HepG2 (cell line): ENCODE measurements at regions of chr1 and their contacts with region 1.

Region 1: GRCh38 chr1:230658691-230659090 is 16.4 kb downstream of the COG2 start:
- DNase-seq: no peak
- ATAC-seq: no peak
- H3K4me3 ChIP-seq: peak overlapping the region in 1 of 3 experiments; percentile 40; a peak in 1 of 6 replicates
- H3K27ac ChIP-seq: peak overlapping the region; percentile 31
- H3K4me1 ChIP-seq: peaks cover 41% of the 10 kb centered on the region
- H3K27me3 ChIP-seq: no peaks in the 10 kb centered on the region
- CTCF ChIP-seq: no peak
- EP300 ChIP-seq: no peak
- POLR2A ChIP-seq: no peak
- RAD21 ChIP-seq: no peak

Region 2: DNA sequence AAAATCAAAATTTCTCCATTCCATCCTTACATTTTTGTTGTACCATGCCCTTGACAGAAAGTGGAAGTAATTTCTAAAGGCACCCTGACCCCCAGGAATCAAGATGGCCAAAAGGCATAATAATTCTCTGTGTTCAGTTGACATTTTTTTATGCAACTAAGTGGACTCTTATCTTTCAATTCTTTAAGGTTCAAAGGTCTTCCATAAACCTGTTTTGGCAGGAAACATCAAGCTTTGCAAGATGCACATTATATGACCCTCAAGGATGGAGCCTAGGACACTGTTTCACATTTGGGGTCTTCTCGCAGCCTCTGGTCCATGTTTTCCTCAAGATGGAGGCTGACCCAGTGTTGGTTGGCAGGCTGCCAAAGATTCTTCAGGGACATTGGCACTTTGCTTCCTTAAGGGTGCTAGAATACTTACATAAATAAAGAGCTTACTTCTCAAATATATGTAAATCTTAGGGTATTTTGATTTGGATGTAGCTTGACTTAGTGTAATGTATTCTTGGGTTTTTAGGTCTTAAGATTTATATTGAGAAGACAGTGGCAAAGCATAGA is 64.4 kb before region 1 on chr1:
- CTCF ChIA-PET with region 1: no interaction called
- POLR2A ChIA-PET with region 1: no interaction called
- in situ Hi-C with region 1: no loop called
- intact Hi-C with region 1: no loop called
- DNase-seq: no peak
- ATAC-seq: no peak
- H3K4me3 ChIP-seq: no peak overlapping the region
- H3K27ac ChIP-seq: no peak overlapping the region
- H3K4me1 ChIP-seq: no peaks in the 10 kb centered on the region
- H3K27me3 ChIP-seq: peaks cover 0 to 7% of the 10 kb centered on the region in 2 experiments; a peak in 1 of 5 replicates
- CTCF ChIP-seq: no peak
- EP300 ChIP-seq: no peak
- POLR2A ChIP-seq: no peak
- RAD21 ChIP-seq: no peak

Region 3: DNA sequence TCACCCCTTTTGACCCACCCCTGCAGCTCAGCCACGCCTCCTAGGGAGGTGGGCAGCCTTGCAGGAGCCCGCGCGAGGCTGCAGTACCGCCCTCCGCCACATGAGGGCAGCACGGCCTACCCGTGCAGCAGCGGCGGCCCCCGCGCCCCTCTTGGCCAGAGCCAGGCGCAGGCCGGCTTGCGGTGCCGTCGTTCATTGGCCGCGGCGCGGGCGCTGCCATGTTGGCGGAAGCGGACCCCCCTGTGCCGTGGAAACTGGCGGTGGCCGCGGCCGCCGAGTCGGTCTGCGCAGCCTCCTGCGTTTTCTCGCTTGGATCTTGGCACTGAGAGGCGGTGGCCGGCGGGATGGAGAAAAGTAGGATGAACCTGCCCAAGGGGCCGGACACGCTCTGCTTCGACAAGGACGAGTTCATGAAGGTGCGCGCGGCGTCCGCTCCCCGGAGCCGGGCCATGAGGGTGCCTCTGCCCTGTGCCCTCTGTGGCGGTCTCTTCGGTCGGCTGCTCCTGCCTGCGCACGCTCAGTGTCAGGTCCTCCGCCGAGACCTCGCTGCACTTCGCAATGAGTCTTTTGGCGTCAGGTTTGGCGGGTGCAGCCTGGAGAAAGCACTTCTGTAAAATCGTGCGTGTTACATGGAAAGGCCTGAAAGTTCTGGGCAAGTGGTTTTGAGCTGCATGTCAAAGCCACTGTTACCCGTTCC is 16.3 kb before region 1 on chr1 and contains the start of gene COG2:
- CTCF ChIA-PET with region 1: no interaction called
- POLR2A ChIA-PET with region 1: interaction called, 17 read pairs
- in situ Hi-C with region 1: no loop called
- intact Hi-C with region 1: no loop called
- DNase-seq: peak; percentile 77
- ATAC-seq: peak; percentile 95
- H3K4me3 ChIP-seq: peak within 1 kb of the TSS; percentile 85 to 96 (median 88)
- H3K27ac ChIP-seq: peak within 1 kb of the TSS; percentile 86
- H3K4me1 ChIP-seq: peaks cover 75% of the 10 kb centered on the region
- H3K27me3 ChIP-seq: no peaks in the 10 kb centered on the region; a peak in 1 of 5 replicates
- CTCF ChIP-seq: peak; percentile 96
- EP300 ChIP-seq: no peak; a peak in 1 of 4 replicates
- POLR2A ChIP-seq: peak; percentile 67 to 88
- RAD21 ChIP-seq: peak; percentile 93
- total RNA-seq, gene COG2: 36.3 and 51.3 TPM in 2 replicates

Region 4: DNA sequence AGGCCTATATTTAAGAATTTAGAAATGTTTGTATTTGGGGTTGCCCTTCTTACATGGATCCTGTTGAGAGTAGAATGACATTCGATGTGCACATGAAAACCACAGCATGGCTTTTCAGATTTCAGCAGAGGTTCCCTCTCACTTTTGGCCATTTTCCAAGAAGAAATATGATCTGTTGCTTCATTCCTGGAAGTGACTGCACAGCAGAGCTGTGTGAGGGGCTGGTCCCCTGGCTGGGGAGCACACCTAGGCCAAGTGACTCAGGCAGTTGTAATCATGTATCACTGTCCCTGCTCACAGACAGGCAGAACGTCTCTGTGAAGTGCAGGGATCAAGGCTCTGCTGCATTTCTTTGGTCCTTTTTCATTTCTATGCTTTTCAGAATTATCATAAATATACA is 22.9 kb after region 1 on chr1:
- CTCF ChIA-PET with region 1: no interaction called
- POLR2A ChIA-PET with region 1: interaction called, 14 read pairs
- in situ Hi-C with region 1: no loop called
- intact Hi-C with region 1: no loop called
- DNase-seq: peak; percentile 77
- ATAC-seq: peak; percentile 94
- H3K4me3 ChIP-seq: no peak overlapping the region
- H3K27ac ChIP-seq: peak overlapping the region; percentile 67
- H3K4me1 ChIP-seq: peaks cover 40% of the 10 kb centered on the region
- H3K27me3 ChIP-seq: no peaks in the 10 kb centered on the region
- CTCF ChIP-seq: no peak
- EP300 ChIP-seq: peak in 1 of 2 experiments; percentile 61; a peak in 1 of 4 replicates
- POLR2A ChIP-seq: no peak
- RAD21 ChIP-seq: no peak